ENCODE measurements at regions of chrX and their contacts with region 1.

Region 1: GRCh38 chrX:37825209-37825842 is 22.0 kb downstream of the DYNLT3 start:
- DNase-seq: peak in 4 of 6 donors; percentile 2 to 46 (median 28)
- ATAC-seq: peak; percentile 77 to 97 (median 90)
- H3K4me3 ChIP-seq: no peak overlapping the region
- H3K27ac ChIP-seq: no peak overlapping the region
- H3K4me1 ChIP-seq: peaks cover 0 to 4% (median 0%) of the 10 kb centered on the region in 3 donors
- H3K27me3 ChIP-seq: peaks cover 0 to 4% (median 0%) of the 10 kb centered on the region in 4 donors
- CTCF ChIP-seq: peak; percentile 74 to 84 (median 80)

Region 2: GRCh38 chrX:37509349-37509748 is 316.0 kb before region 1 on chrX:
- intact Hi-C with region 1: loop called in 1 of 3 experiments (anchors 5 kb)
- DNase-seq: no peak
- ATAC-seq: peak in 3 of 4 donors; percentile 61 to 71 (median 66)
- H3K4me3 ChIP-seq: no peak overlapping the region
- H3K27ac ChIP-seq: no peak overlapping the region
- H3K4me1 ChIP-seq: no peaks in the 10 kb centered on the region
- H3K27me3 ChIP-seq: peaks cover 0 to 2% (median 0%) of the 10 kb centered on the region in 4 donors
- CTCF ChIP-seq: peak in 3 of 4 donors; percentile 17 to 30 (median 21)

Region 3: GRCh38 chrX:37745354-37745753 is 80.0 kb before region 1 on chrX:
- intact Hi-C with region 1: loop called in 1 of 3 experiments (anchors 10 kb)
- DNase-seq: peak; percentile 30 to 86 (median 69)
- ATAC-seq: peak; percentile 86 to 98 (median 95)
- H3K4me3 ChIP-seq: no peak overlapping the region
- H3K27ac ChIP-seq: no peak overlapping the region
- H3K4me1 ChIP-seq: no peaks in the 10 kb centered on the region
- H3K27me3 ChIP-seq: no peaks in the 10 kb centered on the region
- CTCF ChIP-seq: peak; percentile 57 to 87 (median 85)

Region 4: GRCh38 chrX:38347136-38347535 is 521.8 kb after region 1 on chrX:
- intact Hi-C with region 1: no loop called
- DNase-seq: no peak
- ATAC-seq: peak in 3 of 4 donors; percentile 41 to 71 (median 54)
- H3K4me3 ChIP-seq: no peak overlapping the region
- H3K27ac ChIP-seq: no peak overlapping the region
- H3K4me1 ChIP-seq: peaks cover 0 to 13% (median 7%) of the 10 kb centered on the region in 3 donors
- H3K27me3 ChIP-seq: no peaks in the 10 kb centered on the region
- CTCF ChIP-seq: no peak